ENCODE measurements at regions of chr10 and their contacts with region 1.

Region 1: GRCh38 chr10:50431791-50432190 is 180.5 kb upstream of the ASAH2 start:
- DNase-seq: peak in 1 of 2 donors; percentile 65
- H3K4me3 ChIP-seq: peak overlapping the region; percentile 29 to 43
- H3K27ac ChIP-seq: peak overlapping the region; percentile 77 to 83
- H3K4me1 ChIP-seq: peaks cover 0 to 9% of the 10 kb centered on the region in 2 donors
- H3K27me3 ChIP-seq: no peaks in the 10 kb centered on the region
- CTCF ChIP-seq: no peak

Region 2: GRCh38 chr10:50325449-50326171 is 106.2 kb before region 1 on chr10:
- intact Hi-C with region 1: loop called (anchors 5 kb)
- DNase-seq: peak; percentile 50 to 91
- H3K4me3 ChIP-seq: peak overlapping the region in 1 of 2 donors; percentile 39
- H3K27ac ChIP-seq: peak overlapping the region; percentile 73 to 76
- H3K4me1 ChIP-seq: peaks cover 4 to 37% of the 10 kb centered on the region in 2 donors
- H3K27me3 ChIP-seq: no peaks in the 10 kb centered on the region
- CTCF ChIP-seq: no peak

Region 3: DNA sequence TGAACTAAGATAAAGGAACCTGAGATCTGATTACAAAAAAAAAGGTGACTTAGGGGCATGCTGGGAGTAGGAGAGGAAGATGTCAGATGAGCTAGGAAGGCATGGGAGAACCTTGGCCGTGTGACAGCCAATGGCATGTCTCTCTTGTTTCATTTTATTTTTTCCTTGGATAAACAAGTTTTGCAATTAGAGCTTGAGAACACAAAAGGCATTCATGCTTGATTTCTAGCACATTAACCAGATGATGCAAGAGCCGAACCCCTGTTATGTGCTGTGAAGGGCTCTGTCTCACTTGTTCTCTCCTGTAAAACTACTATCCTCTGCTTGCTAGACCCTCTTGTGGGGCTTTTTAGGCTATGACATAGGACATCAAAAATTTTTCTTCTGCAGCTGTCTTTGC is 46.2 kb before region 1 on chr10:
- intact Hi-C with region 1: no loop called
- DNase-seq: no peak
- H3K4me3 ChIP-seq: no peak overlapping the region
- H3K27ac ChIP-seq: no peak overlapping the region
- H3K4me1 ChIP-seq: peaks cover 0 to 10% of the 10 kb centered on the region in 2 donors
- H3K27me3 ChIP-seq: no peaks in the 10 kb centered on the region
- CTCF ChIP-seq: no peak

Region 4: DNA sequence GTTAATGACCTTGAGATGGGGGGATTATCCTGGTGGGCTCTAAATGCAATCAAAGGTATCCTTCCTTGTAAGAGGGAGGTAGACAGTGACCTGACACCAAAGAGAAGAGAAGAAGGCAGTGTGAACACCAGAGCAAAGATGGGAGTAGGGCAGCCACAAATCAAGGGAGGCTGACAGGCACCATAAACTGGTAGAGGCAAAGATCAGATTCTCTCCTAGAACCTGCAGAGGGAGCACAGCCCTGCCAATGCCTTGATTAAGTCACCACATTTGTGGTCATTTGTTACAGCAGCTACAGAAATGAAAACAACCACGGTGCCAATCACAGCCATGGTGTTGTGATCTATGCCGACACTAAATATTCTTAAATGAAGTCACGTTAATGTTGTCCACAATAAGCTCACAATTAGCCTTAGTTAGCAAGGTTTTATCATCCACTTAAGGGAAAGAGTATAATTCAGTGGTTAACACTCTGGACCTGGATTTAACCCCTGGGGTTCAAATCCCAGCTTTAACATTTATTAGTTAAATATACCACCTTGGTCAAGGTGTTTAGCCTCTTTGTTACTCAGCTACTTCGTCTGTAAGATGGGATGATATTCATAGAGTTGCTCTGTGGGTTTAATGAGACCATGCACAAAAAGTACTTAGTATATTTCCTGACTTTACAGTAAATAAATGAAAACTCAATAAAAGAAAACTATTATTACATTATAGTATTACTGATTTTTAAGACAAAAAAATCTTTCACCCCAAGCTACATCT is 121.2 kb after region 1 on chr10:
- intact Hi-C with region 1: loop called (anchors 5 kb)
- DNase-seq: no peak
- H3K4me3 ChIP-seq: no peak overlapping the region
- H3K27ac ChIP-seq: peak overlapping the region; percentile 69 to 72
- H3K4me1 ChIP-seq: peaks cover 14 to 55% of the 10 kb centered on the region in 2 donors
- H3K27me3 ChIP-seq: no peaks in the 10 kb centered on the region
- CTCF ChIP-seq: peak in 1 of 3 experiments; percentile 30

Measured in ascending aorta (tissue), 2 donors.